ENCODE measurements at regions of chr11 and their contacts with region 1.

Region 1: GRCh38 chr11:33773987-33774735 is at the start of gene FBXO3:
- DNase-seq: peak; percentile 67 to 97 (median 84)

Region 2: GRCh38 chr11:33700425-33701271 is 73.5 kb before region 1 on chr11 and contains the start of gene C11orf91:
- intact Hi-C with region 1: loop called (anchors 2 kb)
- DNase-seq: peak; percentile 84 to 99 (median 94)